Activated CD4-positive, alpha-beta T cell treated with anti-CD3 and anti-CD28 coated beads for 36 hours (primary cell): ENCODE measurements at regions of chr3 and their contacts with region 1.

Region 1: DNA sequence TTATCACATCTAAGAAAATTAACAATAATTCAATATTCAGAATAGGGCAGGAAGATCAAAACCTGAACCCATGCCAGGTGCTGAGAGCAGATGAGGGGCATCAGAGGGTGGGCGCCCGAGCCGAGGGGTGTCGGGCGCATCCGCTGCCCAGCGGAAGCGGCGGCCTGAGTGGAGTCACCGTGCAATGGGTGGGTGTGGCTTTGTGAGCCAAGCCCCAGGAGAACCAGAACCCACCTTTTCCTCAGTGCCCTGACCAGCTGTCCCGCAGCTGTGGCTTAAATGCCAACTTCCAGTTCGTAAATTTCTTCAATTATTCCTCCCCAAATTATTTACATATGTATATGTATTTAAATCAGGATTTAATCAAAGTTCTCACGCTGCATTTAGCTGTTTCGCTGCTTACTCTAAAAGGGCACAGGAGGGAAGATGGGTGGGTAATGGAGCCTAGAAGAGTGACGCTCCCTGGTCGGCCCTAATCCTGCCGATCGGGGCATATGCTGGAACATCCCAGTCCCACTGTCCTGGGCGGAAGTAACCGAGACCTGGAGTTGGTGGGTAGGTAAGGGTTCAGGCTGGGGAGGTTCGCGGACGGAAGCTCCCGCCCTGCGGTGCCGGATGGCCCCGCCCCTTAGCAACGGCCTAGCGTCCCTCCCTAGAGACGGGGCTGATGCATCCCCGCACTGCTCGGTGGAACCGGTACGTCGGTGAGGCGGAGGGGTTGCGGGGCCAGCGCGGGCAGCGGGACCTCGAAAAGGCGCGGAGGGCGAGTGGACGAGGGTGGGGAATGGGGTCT is 1.3 kb downstream of the DNAH1 start:
- DNase-seq: peak; percentile 83
- ATAC-seq: peak; percentile 96
- H3K4me3 Mint-ChIP-seq: peak overlapping the region; percentile 50
- H3K27ac Mint-ChIP-seq: no peak overlapping the region
- H3K4me1 Mint-ChIP-seq: peaks cover 20% of the 10 kb centered on the region
- H3K27me3 Mint-ChIP-seq: no peaks in the 10 kb centered on the region

Region 2: DNA sequence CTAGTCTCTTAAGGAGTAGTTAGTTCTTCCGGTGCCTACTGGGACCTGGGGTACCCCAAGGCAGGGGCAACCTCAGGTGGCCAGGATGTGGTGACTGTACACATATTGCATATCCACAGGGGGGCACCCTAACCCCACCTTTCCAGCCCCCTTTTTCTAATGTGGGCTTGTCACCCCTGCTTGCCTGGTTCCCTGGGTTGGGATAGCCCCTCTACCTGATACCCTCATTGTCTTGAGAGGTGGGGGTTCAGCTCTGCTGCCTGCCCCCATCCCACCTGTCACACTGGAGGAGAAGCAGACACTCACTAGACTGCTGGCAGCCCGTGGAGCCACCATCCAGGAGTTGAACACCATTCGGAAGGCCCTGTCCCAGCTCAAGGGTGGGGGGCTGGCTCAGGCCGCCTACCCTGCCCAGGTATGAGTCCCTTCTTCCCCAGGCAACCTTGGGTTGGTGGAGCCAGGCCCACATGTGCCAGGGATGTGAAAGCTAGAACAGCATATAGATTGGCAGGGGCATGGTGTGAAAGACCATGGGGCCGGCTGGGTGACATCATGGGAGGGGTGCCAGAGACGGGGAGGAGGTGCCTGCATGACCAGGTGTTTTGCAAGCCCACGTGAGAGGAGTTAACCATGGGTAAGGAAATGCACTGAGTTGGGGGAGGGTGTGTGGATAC is 25.8 kb before region 1 on chr3:
- CTCF ChIA-PET with region 1: interaction called, 3 read pairs
- POLR2A ChIA-PET with region 1: no interaction called
- intact Hi-C with region 1: loop called in 1 of 2 experiments (anchors 1 kb)
- DNase-seq: peak; percentile 66
- ATAC-seq: no peak
- H3K4me3 Mint-ChIP-seq: no peak overlapping the region
- H3K27ac Mint-ChIP-seq: no peak overlapping the region
- H3K4me1 Mint-ChIP-seq: peaks cover 16% of the 10 kb centered on the region
- H3K27me3 Mint-ChIP-seq: no peaks in the 10 kb centered on the region

Region 3: GRCh38 chr3:52302426-52303145 is 14.8 kb before region 1 on chr3:
- CTCF ChIA-PET with region 1: no interaction called
- POLR2A ChIA-PET with region 1: no interaction called
- intact Hi-C with region 1: no loop called
- DNase-seq: no peak
- ATAC-seq: no peak
- H3K4me3 Mint-ChIP-seq: no peak overlapping the region
- H3K27ac Mint-ChIP-seq: no peak overlapping the region
- H3K4me1 Mint-ChIP-seq: peaks cover 22% of the 10 kb centered on the region
- H3K27me3 Mint-ChIP-seq: no peaks in the 10 kb centered on the region